GM13977 (cell line): ENCODE measurements at regions of chr17 and their contacts with region 1.

Region 1: GRCh38 chr17:60135151-60135950 is 14.4 kb upstream of the CA4 start:
- DNase-seq: peak; percentile 97
- CTCF ChIP-seq: no peak

Region 2: GRCh38 chr17:58232707-58233156 is 1902.6 kb before region 1 on chr17:
- in situ Hi-C with region 1: no loop called
- DNase-seq: peak; percentile 43
- CTCF ChIP-seq: no peak

Region 3: GRCh38 chr17:59903455-59903854 is 231.9 kb before region 1 on chr17:
- in situ Hi-C with region 1: no loop called
- DNase-seq: no peak
- CTCF ChIP-seq: no peak

Region 4: DNA sequence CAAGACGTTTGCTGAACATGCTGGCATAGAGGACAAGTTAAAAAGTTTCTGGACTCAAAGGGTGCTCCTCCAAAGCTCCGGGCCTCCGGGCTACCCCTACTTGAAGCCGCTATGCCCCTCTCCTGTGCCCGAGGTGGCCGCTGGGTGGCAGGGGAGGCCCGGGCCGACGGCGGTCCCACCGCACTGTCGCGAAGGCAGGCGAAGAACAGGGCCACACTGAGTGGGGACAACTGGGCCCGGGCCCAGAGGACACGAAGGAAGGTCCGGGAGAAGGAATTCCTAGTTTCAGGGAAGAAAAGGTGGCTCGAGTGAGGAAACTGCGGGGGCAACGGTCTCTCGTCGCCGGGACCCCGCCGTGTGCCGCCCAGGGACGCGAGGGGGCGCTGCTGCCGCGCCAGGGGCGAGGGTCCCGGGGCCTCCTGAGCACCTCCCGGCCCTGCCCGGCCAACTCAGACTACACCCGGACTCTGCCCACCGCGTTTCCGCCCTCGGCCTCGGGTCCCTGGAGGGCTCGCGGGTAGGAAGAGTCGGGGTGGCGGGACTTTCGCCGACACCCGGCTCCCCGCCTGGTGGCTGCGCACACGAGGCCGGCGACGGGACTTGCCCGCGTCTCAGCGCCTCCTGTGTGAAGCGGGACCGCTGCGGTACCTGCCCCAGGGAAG is 286.1 kb after region 1 on chr17:
- in situ Hi-C with region 1: loop called (anchors 25 kb)
- DNase-seq: peak; percentile 87
- CTCF ChIP-seq: peak; percentile 91

Region 5: DNA sequence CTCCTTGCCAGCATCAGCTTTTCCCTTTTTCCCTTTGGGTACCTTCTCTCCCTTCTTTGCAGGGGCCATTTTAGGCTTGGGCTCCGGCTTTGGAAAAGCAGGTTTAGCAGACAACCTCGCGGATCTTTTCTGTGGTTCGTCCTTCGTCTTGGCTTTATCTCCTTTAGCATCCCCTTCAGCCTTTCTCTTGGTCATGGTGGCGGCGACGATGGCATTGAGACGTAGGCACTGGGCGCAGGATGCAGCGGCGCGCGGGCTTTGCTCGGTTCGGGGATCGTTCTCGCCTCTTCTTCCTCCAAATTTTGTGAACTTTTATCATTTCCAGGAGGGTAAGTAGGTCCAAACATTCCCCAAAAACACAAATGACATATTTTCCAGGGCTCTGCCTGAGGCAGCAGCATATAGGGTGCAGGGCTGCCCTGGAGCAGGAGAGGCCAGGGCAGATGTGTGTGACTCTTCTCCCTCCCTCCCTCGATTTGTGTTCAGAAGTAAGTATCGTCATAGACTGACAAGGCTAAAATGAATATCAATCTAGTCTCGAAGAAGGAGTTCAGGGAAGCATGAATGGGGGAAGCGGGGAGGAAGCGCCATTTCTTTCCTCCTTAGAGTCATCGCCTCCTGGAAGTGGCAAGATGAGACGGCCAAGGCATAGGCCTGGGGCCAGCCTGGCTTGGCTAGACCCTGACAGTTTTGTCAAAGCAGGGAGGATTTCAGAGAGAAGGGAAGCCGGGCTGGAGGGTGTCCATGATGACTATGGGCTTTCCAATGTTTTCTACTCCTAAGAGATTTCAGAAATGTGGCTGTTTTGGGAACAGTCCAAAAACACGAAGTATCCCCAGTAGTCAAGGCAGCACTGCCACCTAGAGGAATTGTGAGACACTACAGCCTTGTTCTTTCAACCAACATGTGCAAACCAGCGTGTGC is 300.2 kb after region 1 on chr17:
- in situ Hi-C with region 1: no loop called
- DNase-seq: peak; percentile 72
- CTCF ChIP-seq: peak; percentile 91

Region 6: GRCh38 chr17:60641810-60642220 is 506.5 kb after region 1 on chr17:
- in situ Hi-C with region 1: loop called (anchors 25 kb)
- DNase-seq: peak; percentile 42
- CTCF ChIP-seq: peak; percentile 55